ENCODE measurements at regions of chr3 and their contacts with region 1.

Region 1: GRCh38 chr3:33372218-33373081 is 67.8 kb downstream of the UBP1 start:
- DNase-seq: peak; percentile 8 to 56 (median 16)
- H3K4me3 ChIP-seq: no peak overlapping the region
- H3K4me3 Mint-ChIP-seq: no peak overlapping the region
- H3K27ac ChIP-seq: no peak overlapping the region
- H3K27ac Mint-ChIP-seq: no peak overlapping the region
- H3K4me1 ChIP-seq: no peaks in the 10 kb centered on the region
- H3K4me1 Mint-ChIP-seq: peaks cover 0 to 7% (median 7%) of the 10 kb centered on the region in 3 donors
- H3K27me3 ChIP-seq: no peaks in the 10 kb centered on the region
- H3K27me3 Mint-ChIP-seq: peaks cover 10 to 25% of the 10 kb centered on the region in 2 donors

Region 2: DNA sequence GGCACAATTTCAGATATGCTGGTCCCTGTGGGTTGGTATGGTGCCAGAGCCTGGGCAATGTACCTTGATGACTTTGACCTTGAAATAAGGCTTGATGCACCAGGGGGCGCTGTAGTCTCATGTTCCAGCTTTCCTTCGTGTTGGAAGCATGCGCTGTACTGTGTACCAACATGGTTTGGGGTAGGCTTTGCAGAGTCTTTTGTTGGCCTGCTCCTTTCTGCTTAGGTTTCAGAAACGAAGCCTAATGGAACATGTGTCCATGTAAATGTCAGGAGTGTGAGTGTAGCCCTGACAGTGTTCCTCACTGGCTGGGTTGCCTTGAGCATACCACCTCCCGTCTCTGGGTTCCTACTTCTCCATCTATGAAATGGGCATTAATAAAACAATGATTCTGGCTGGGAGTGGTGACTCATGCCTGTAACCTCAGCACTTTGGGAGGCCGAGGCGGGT is 424.6 kb before region 1 on chr3:
- CTCF ChIA-PET with region 1: interaction called, 23 read pairs
- POLR2A ChIA-PET with region 1: no interaction called
- DNase-seq: peak; percentile 69 to 90 (median 83)
- H3K4me3 ChIP-seq: no peak overlapping the region
- H3K4me3 Mint-ChIP-seq: peak overlapping the region in 1 of 7 donors; percentile 57
- H3K27ac ChIP-seq: no peak overlapping the region
- H3K27ac Mint-ChIP-seq: peak overlapping the region in 3 of 8 donors; percentile 23 to 38 (median 32)
- H3K4me1 ChIP-seq: peaks cover 21% of the 10 kb centered on the region
- H3K4me1 Mint-ChIP-seq: peaks cover 21 to 47% (median 46%) of the 10 kb centered on the region in 3 donors
- H3K27me3 ChIP-seq: no peaks in the 10 kb centered on the region
- H3K27me3 Mint-ChIP-seq: no peaks in the 10 kb centered on the region

Region 3: GRCh38 chr3:33331414-33331813 is 41.0 kb before region 1 on chr3:
- CTCF ChIA-PET with region 1: no interaction called
- POLR2A ChIA-PET with region 1: no interaction called
- DNase-seq: no peak
- H3K4me3 ChIP-seq: no peak overlapping the region
- H3K4me3 Mint-ChIP-seq: no peak overlapping the region
- H3K27ac ChIP-seq: no peak overlapping the region
- H3K27ac Mint-ChIP-seq: no peak overlapping the region
- H3K4me1 ChIP-seq: no peaks in the 10 kb centered on the region
- H3K4me1 Mint-ChIP-seq: no peaks in the 10 kb centered on the region
- H3K27me3 ChIP-seq: no peaks in the 10 kb centered on the region
- H3K27me3 Mint-ChIP-seq: peaks cover 6 to 36% of the 10 kb centered on the region in 2 donors

Region 4: GRCh38 chr3:33385423-33385822 is 13.0 kb after region 1 on chr3:
- CTCF ChIA-PET with region 1: interaction called, 10 read pairs
- POLR2A ChIA-PET with region 1: no interaction called
- DNase-seq: peak in 1 of 5 donors; percentile 51
- H3K4me3 ChIP-seq: no peak overlapping the region
- H3K4me3 Mint-ChIP-seq: no peak overlapping the region
- H3K27ac ChIP-seq: peak overlapping the region; percentile 9
- H3K27ac Mint-ChIP-seq: peak overlapping the region in 4 of 8 donors; percentile 37 to 76 (median 52)
- H3K4me1 ChIP-seq: no peaks in the 10 kb centered on the region
- H3K4me1 Mint-ChIP-seq: peaks cover 3 to 13% (median 10%) of the 10 kb centered on the region in 3 donors
- H3K27me3 ChIP-seq: no peaks in the 10 kb centered on the region
- H3K27me3 Mint-ChIP-seq: no peaks in the 10 kb centered on the region

Region 5: GRCh38 chr3:33636125-33636850 is 263.8 kb after region 1 on chr3:
- CTCF ChIA-PET with region 1: no interaction called
- POLR2A ChIA-PET with region 1: no interaction called
- DNase-seq: peak in 2 of 5 donors; percentile 26 to 38
- H3K4me3 ChIP-seq: no peak overlapping the region
- H3K4me3 Mint-ChIP-seq: no peak overlapping the region
- H3K27ac ChIP-seq: no peak overlapping the region
- H3K27ac Mint-ChIP-seq: peak overlapping the region in 1 of 8 donors; percentile 58
- H3K4me1 ChIP-seq: no peaks in the 10 kb centered on the region
- H3K4me1 Mint-ChIP-seq: peaks cover 0 to 3% (median 2%) of the 10 kb centered on the region in 3 donors
- H3K27me3 ChIP-seq: no peaks in the 10 kb centered on the region
- H3K27me3 Mint-ChIP-seq: no peaks in the 10 kb centered on the region